Naive thymus-derived CD4-positive, alpha-beta T cell (primary cell): ENCODE measurements at regions of chr13 and their contacts with region 1.

Region 1: GRCh38 chr13:19959831-19960652 is 1.5 kb downstream of the ZMYM2 start:
- DNase-seq: peak; percentile 61 to 91 (median 86)
- ATAC-seq: peak; percentile 63
- H3K4me3 ChIP-seq: peak overlapping the region; percentile 84
- H3K4me3 Mint-ChIP-seq: peak overlapping the region; percentile 90 to 99 (median 98)
- H3K27ac ChIP-seq: peak overlapping the region; percentile 97
- H3K27ac Mint-ChIP-seq: peak overlapping the region; percentile 91 to 99 (median 97)
- H3K4me1 ChIP-seq: peaks cover 19 to 30% of the 10 kb centered on the region in 2 donors
- H3K4me1 Mint-ChIP-seq: peaks cover 19 to 45% (median 31%) of the 10 kb centered on the region in 7 donors
- H3K27me3 ChIP-seq: no peaks in the 10 kb centered on the region
- H3K27me3 Mint-ChIP-seq: peaks cover 0 to 12% (median 0%) of the 10 kb centered on the region in 5 donors

Region 2: GRCh38 chr13:19587635-19588300 is 372.3 kb before region 1 on chr13:
- CTCF ChIA-PET with region 1: no interaction called
- POLR2A ChIA-PET with region 1: no interaction called
- intact Hi-C with region 1: loop called in 1 of 2 experiments (anchors 2 kb)
- DNase-seq: peak in 7 of 9 donors; percentile 14 to 58 (median 42)
- ATAC-seq: peak; percentile 48
- H3K4me3 ChIP-seq: peak overlapping the region; percentile 36
- H3K4me3 Mint-ChIP-seq: peak overlapping the region; percentile 68 to 89 (median 80)
- H3K27ac ChIP-seq: peak overlapping the region; percentile 31
- H3K27ac Mint-ChIP-seq: peak overlapping the region; percentile 76 to 94 (median 86)
- H3K4me1 ChIP-seq: peaks cover 6 to 17% of the 10 kb centered on the region in 2 donors
- H3K4me1 Mint-ChIP-seq: peaks cover 14 to 32% (median 25%) of the 10 kb centered on the region in 7 donors
- H3K27me3 ChIP-seq: no peaks in the 10 kb centered on the region
- H3K27me3 Mint-ChIP-seq: peaks cover 0 to 9% (median 0%) of the 10 kb centered on the region in 5 donors

Region 3: GRCh38 chr13:19863323-19864023 is 96.6 kb before region 1 on chr13 and contains the start of gene ZMYM5:
- CTCF ChIA-PET with region 1: interaction called, 4 read pairs
- POLR2A ChIA-PET with region 1: interaction called, 19 read pairs
- intact Hi-C with region 1: loop called (anchors 1 kb)
- DNase-seq: peak; percentile 87 to 96 (median 90)
- ATAC-seq: peak; percentile 89
- H3K4me3 ChIP-seq: peak within 1 kb of the TSS; percentile 80
- H3K4me3 Mint-ChIP-seq: peak within 1 kb of the TSS; percentile 85 to 98 (median 97)
- H3K27ac ChIP-seq: peak within 1 kb of the TSS; percentile 84
- H3K27ac Mint-ChIP-seq: peak within 1 kb of the TSS; percentile 90 to 98 (median 97)
- H3K4me1 ChIP-seq: peaks cover 22 to 23% of the 10 kb centered on the region in 2 donors
- H3K4me1 Mint-ChIP-seq: peaks cover 12 to 43% (median 37%) of the 10 kb centered on the region in 7 donors
- H3K27me3 ChIP-seq: no peaks in the 10 kb centered on the region
- H3K27me3 Mint-ChIP-seq: no peaks in the 10 kb centered on the region
- total RNA-seq, gene ZMYM5: 17.5 to 25.6 (median 24.7) TPM

Region 4: GRCh38 chr13:20160847-20161274 is 200.8 kb after region 1 on chr13 and contains the start of gene GJA3:
- CTCF ChIA-PET with region 1: no interaction called
- POLR2A ChIA-PET with region 1: no interaction called
- intact Hi-C with region 1: loop called (anchors 1 to 10 kb)
- DNase-seq: peak in 8 of 9 donors; percentile 30 to 61 (median 44)
- ATAC-seq: peak; percentile 68
- H3K4me3 ChIP-seq: peak within 1 kb of the TSS; percentile 43
- H3K4me3 Mint-ChIP-seq: peak within 1 kb of the TSS; percentile 78 to 90 (median 86)
- H3K27ac ChIP-seq: no peak within 1 kb of the TSS
- H3K27ac Mint-ChIP-seq: peak within 1 kb of the TSS in 3 of 9 donors; percentile 51 to 72 (median 55)
- H3K4me1 ChIP-seq: peaks cover 5 to 6% of the 10 kb centered on the region in 2 donors
- H3K4me1 Mint-ChIP-seq: peaks cover 0 to 22% (median 13%) of the 10 kb centered on the region in 7 donors
- H3K27me3 ChIP-seq: peaks cover 0 to 29% of the 10 kb centered on the region in 2 donors
- H3K27me3 Mint-ChIP-seq: peaks cover 21 to 73% (median 46%) of the 10 kb centered on the region in 5 donors
- total RNA-seq, gene GJA3: 0.05 to 0.17 (median 0.08) TPM in 3 of 5 experiments, not detected in the others

Region 5: GRCh38 chr13:20566898-20567874 is 607.1 kb after region 1 on chr13 and contains the start of gene IFT88:
- CTCF ChIA-PET with region 1: no interaction called
- POLR2A ChIA-PET with region 1: no interaction called
- intact Hi-C with region 1: loop called in 1 of 2 experiments (anchors 1 kb)
- DNase-seq: peak; percentile 72 to 87 (median 80)
- ATAC-seq: peak; percentile 94
- H3K4me3 ChIP-seq: peak within 1 kb of the TSS; percentile 52
- H3K4me3 Mint-ChIP-seq: peak within 1 kb of the TSS; percentile 88 to 97 (median 93)
- H3K27ac ChIP-seq: peak within 1 kb of the TSS; percentile 73
- H3K27ac Mint-ChIP-seq: peak within 1 kb of the TSS; percentile 92 to 94 (median 93)
- H3K4me1 ChIP-seq: peaks cover 0 to 8% of the 10 kb centered on the region in 2 donors
- H3K4me1 Mint-ChIP-seq: peaks cover 7 to 18% (median 17%) of the 10 kb centered on the region in 7 donors
- H3K27me3 ChIP-seq: no peaks in the 10 kb centered on the region
- H3K27me3 Mint-ChIP-seq: no peaks in the 10 kb centered on the region
- total RNA-seq, gene IFT88: 5.0 to 17.0 (median 11.7) TPM

Region 6: DNA sequence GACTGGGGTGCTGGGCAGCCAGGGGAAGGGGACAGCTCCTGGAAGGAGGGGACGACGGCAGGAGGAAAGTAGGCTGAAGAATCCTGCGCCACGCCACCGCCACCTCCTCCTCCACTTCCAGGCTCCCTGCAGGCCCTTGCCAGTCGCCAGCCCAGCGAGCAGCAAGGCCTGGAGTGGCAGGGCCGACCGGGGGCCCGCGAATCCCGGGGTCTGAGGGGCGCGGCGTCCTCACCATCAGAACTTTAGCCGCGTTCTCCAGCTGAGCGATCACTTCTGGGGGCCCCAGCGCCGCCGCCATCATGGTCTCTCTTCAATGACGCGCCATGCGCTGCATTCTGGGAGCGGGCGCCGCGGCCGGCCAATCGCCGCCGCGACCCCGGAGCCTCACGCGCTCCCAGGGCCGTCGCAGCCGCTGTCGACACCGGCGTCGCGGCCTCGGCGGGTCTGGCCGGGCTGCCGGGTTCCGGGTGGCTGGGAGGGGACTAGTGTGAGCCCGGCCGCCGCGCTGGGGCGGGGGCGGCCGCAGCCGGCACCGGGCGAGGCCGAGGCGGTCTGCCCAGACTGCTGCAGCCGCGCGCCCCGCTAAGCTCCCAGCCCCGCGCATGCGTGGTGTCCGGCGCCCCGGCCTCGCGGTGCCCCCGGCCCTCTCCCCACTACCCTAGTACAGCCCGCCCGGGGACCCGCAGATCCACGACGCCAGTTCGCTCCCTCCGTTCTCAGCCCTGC is 942.6 kb after region 1 on chr13 and contains the start of gene XPO4:
- CTCF ChIA-PET with region 1: interaction called, 3 read pairs
- POLR2A ChIA-PET with region 1: interaction called, 4 read pairs
- intact Hi-C with region 1: loop called in 1 of 2 experiments (anchors 2 kb)
- DNase-seq: peak; percentile 68 to 85 (median 77)
- ATAC-seq: peak; percentile 97
- H3K4me3 ChIP-seq: peak within 1 kb of the TSS; percentile 98
- H3K4me3 Mint-ChIP-seq: peak within 1 kb of the TSS; percentile 93 to 98 (median 96)
- H3K27ac ChIP-seq: peak within 1 kb of the TSS; percentile 83
- H3K27ac Mint-ChIP-seq: peak within 1 kb of the TSS; percentile 89 to 98 (median 95)
- H3K4me1 ChIP-seq: peaks cover 10 to 21% of the 10 kb centered on the region in 2 donors
- H3K4me1 Mint-ChIP-seq: peaks cover 15 to 41% (median 32%) of the 10 kb centered on the region in 7 donors
- H3K27me3 ChIP-seq: no peaks in the 10 kb centered on the region
- H3K27me3 Mint-ChIP-seq: peaks cover 0 to 3% (median 0%) of the 10 kb centered on the region in 5 donors
- total RNA-seq, gene XPO4: 20.9 to 26.5 (median 23.5) TPM

Region 7: DNA sequence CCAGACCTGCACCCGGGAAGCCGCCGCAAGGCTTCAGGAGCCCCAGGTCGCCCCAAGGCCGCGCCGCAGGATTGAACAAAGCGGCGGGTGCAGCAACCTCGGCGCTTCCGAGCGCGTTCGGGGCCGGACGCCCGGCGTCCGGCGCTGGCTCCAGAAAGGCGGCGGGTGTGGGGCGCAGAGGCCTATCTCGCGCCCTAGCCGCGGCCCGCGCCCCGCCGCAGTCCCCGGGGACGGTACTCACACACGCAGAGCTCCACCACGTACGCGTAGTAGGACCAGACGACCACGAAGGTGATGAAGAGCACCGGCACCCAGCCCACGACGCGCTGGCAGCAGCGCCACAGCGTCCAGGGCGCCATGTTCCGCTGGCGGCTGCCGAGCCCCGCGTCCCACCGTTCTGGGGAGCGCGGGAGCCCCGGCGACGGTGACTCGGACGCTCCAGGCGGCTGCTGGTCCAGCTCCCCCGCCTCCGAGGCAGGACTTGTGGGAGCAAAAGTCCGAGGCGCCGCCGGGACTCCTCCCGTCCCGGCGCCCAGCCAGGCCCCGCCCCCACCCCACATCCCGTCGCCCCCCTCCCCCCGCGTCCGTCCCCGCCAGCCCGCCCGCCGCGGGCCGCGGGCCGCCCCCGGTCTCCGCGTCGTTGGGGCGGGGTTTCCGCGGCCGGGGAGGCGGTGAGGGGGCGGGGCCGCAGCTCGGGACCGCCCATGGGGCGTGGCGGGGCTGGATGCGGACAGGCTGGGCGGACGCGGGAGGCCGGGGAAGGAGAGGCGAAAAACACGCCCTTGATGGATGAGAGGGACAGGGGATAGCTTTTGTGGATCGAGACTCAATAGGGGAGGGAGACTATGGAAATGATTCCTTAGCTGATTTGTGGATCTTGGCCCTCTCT is 1499.0 kb after region 1 on chr13 and contains the start of gene ZDHHC20:
- CTCF ChIA-PET with region 1: no interaction called
- POLR2A ChIA-PET with region 1: no interaction called
- intact Hi-C with region 1: loop called in 1 of 2 experiments (anchors 5 kb)
- DNase-seq: peak; percentile 75 to 99 (median 88)
- ATAC-seq: peak; percentile 98
- H3K4me3 ChIP-seq: peak within 1 kb of the TSS; percentile 90
- H3K4me3 Mint-ChIP-seq: peak within 1 kb of the TSS; percentile 91 to 97 (median 94)
- H3K27ac ChIP-seq: peak within 1 kb of the TSS; percentile 97
- H3K27ac Mint-ChIP-seq: peak within 1 kb of the TSS; percentile 74 to 98 (median 94)
- H3K4me1 ChIP-seq: peaks cover 9 to 19% of the 10 kb centered on the region in 2 donors
- H3K4me1 Mint-ChIP-seq: peaks cover 27 to 55% (median 42%) of the 10 kb centered on the region in 7 donors
- H3K27me3 ChIP-seq: no peaks in the 10 kb centered on the region
- H3K27me3 Mint-ChIP-seq: peaks cover 0 to 7% (median 0%) of the 10 kb centered on the region in 5 donors
- total RNA-seq, gene ZDHHC20: 60.8 to 89.9 (median 71.7) TPM